Common myeloid progenitor, CD34-positive (primary cell): ENCODE measurements at regions of chr2 and their contacts with region 1.

Region 1: GRCh38 chr2:101223814-101224231 is 28.9 kb upstream of the CNOT11 start:
- DNase-seq: peak; percentile 79 to 97 (median 96)
- H3K4me3 ChIP-seq: no peak overlapping the region
- H3K27ac ChIP-seq: no peak overlapping the region
- H3K4me1 ChIP-seq: peaks cover 4 to 28% (median 12%) of the 10 kb centered on the region in 4 experiments
- H3K27me3 ChIP-seq: no peaks in the 10 kb centered on the region

Region 2: DNA sequence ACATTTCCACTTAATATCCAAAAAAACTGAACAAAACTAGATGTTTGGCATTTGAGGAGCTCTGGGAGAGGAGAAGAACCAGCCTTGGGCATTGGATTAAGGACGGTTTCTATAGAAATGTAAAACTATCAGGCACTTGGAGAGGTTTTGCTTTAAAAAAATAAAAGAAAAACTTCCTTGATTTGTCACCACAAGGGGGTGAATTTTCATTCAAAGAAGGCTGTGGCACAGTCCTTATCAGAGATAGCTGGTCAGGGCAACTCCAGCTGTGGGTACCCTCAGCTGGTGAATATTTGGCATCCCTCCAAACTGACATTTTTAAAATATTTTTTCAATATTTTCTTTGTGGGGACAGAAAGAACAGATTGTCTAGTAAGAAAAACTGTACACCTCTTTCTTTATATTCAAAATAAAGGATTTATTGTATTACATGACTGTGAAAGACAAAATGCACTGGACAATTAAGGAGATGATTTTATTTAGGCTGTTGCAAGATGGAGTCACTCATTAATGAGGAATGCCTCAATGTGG is 26.5 kb before region 1 on chr2:
- CTCF ChIA-PET with region 1: interaction called, 40 read pairs
- POLR2A ChIA-PET with region 1: no interaction called
- DNase-seq: peak; percentile 54 to 69 (median 59)
- H3K4me3 ChIP-seq: no peak overlapping the region
- H3K27ac ChIP-seq: no peak overlapping the region
- H3K4me1 ChIP-seq: peaks cover 0 to 7% (median 2%) of the 10 kb centered on the region in 4 experiments
- H3K27me3 ChIP-seq: no peaks in the 10 kb centered on the region

Region 3: DNA sequence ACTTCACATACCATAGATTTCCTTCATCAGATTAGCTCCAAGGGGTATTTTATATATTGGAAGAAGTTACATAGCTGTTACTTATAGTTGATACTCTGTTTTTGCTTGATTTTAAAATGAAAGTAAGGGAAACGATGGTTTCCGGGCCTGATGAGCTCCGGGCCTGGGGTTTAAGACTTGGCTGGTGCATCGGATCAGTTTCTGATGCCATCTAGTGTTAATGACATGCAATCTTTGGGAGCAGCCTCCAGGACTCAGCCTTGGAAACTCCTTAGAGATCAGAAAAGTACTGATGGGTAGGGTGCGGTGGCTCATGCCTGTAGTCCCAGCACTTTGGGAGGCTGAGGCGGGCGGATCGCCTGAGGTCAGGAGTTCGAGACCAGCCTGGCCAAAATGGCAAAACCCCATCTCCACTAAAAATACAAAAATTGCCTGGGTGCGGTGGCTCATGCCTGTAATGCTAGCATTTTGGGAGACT is 18.3 kb before region 1 on chr2:
- CTCF ChIA-PET with region 1: interaction called, 40 read pairs
- POLR2A ChIA-PET with region 1: no interaction called
- DNase-seq: peak; percentile 71 to 79 (median 76)
- H3K4me3 ChIP-seq: peak overlapping the region in 4 of 7 experiments; percentile 13 to 68 (median 43)
- H3K27ac ChIP-seq: peak overlapping the region in 1 of 2 experiments; percentile 34
- H3K4me1 ChIP-seq: peaks cover 0 to 5% (median 3%) of the 10 kb centered on the region in 4 experiments
- H3K27me3 ChIP-seq: no peaks in the 10 kb centered on the region

Region 4: DNA sequence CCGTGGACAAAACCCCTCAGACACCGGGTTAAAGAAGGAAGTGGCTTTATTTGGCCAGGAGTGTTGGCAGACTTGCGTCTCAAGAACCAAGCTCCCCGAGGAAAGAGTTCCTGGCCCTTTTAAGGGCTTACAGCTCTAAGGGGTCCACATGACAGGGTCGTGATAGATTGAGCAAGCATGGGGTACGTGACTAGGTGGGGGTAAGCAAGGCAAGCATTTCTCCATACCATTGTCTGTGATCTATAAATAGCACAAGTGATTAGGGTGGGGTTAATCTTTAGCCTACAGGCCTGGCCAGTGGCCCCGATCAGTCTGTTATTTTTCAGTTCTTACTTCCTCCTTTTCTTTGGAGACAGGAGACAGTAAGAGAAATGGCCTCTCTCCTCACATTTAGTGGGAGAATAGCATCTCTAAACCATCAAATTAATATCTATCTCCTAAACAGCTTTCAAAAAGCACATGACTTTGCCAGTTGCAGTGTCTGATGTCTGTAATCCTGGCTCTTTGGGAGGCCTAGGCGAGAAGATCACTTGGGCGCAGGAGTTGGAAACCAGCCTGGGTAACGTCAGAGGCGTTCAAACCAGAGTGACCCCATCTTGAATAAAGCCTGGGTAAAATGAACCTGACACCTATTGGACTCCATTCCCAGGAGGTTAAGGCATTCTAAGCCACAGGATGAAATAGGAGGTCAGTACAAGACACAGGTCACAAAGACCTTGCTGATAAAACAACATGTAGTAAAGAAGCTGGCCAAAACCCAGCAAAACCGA is 10.5 kb after region 1 on chr2:
- CTCF ChIA-PET with region 1: interaction called, 28 read pairs
- POLR2A ChIA-PET with region 1: no interaction called
- DNase-seq: no peak
- H3K4me3 ChIP-seq: no peak overlapping the region
- H3K27ac ChIP-seq: no peak overlapping the region
- H3K4me1 ChIP-seq: peaks cover 0 to 4% (median 0%) of the 10 kb centered on the region in 4 experiments
- H3K27me3 ChIP-seq: no peaks in the 10 kb centered on the region

Region 5: GRCh38 chr2:101308432-101309210 is 84.8 kb after region 1 on chr2 and contains the start of gene RNF149:
- CTCF ChIA-PET with region 1: no interaction called
- POLR2A ChIA-PET with region 1: no interaction called
- DNase-seq: peak; percentile 95 to 99 (median 99)
- H3K4me3 ChIP-seq: peak within 1 kb of the TSS; percentile 58 to 91 (median 82)
- H3K27ac ChIP-seq: peak within 1 kb of the TSS; percentile 67 to 86
- H3K4me1 ChIP-seq: peaks cover 27 to 71% (median 56%) of the 10 kb centered on the region in 4 experiments
- H3K27me3 ChIP-seq: no peaks in the 10 kb centered on the region